ENCODE measurements at regions of chr9 and their contacts with region 1.

Region 1: GRCh38 chr9:73038613-73039012 is 85.8 kb upstream of the ALDH1A1 start:
- DNase-seq: peak; percentile 53 to 57
- H3K4me3 ChIP-seq: no peak overlapping the region
- H3K27ac ChIP-seq: no peak overlapping the region
- H3K4me1 ChIP-seq: peaks cover 30% of the 10 kb centered on the region
- H3K27me3 ChIP-seq: no peaks in the 10 kb centered on the region
- CTCF ChIP-seq: no peak

Region 2: DNA sequence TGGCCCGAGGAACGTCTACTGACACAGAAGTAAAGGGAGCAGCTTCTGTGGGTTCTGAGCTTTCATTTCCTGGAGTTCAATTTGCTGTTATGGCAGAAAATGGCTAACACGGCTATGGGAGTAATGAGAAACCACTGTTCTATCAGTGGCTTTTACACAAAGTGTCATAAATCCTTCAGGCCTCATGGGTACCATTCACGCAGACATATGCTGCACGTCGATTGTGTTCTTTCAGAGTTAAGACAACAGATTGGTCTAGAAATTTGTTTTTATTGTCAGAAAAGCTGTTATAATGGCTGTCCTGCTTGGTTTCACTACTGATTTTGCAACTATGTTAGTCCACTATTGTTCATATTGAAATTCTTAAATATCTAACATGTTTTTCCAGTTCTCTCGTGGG is 221.2 kb before region 1 on chr9:
- CTCF ChIA-PET with region 1: interaction called, 6 read pairs
- POLR2A ChIA-PET with region 1: interaction called, 10 read pairs
- intact Hi-C with region 1: no loop called
- DNase-seq: no peak
- H3K4me3 ChIP-seq: no peak overlapping the region
- H3K27ac ChIP-seq: no peak overlapping the region
- H3K4me1 ChIP-seq: no peaks in the 10 kb centered on the region; the same call in 1 of the 2 replicates
- H3K27me3 ChIP-seq: no peaks in the 10 kb centered on the region
- CTCF ChIP-seq: no peak

Region 3: DNA sequence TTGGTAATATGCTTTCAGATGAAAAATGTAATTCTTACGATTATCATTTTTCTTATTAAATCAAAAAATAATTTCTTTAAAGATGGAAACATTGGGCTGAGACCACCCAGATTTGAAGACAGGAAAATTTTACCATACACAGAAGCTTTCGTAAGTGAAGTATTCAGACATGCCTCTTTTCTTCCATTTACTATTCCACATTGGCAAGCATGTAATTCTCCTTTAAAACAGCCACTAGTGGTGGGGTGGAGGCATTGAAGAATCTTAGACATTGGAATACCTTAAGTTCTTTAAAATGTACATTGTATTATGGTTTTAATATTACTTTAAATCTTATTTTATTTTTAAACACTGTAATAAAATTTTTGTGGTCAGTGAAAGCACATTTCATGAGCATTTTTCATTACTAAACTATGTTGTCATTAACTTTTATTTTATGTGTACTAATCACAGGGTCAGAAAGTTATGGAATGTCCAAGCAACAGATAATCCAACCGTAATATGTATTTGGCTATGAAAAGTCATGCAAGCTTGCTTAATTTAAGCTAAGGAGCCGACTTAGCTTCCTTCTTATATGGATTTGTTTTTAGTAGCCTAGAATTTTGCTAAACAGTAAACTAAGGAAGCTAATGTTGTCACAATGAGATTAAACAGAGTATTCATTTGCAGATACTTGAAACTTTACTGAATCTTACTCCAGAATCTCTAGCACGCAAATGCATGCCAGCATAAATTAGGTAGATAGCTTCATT is 11.6 kb after region 1 on chr9:
- CTCF ChIA-PET with region 1: no interaction called
- POLR2A ChIA-PET with region 1: interaction called, 26 read pairs
- intact Hi-C with region 1: no loop called
- DNase-seq: no peak
- H3K4me3 ChIP-seq: no peak overlapping the region
- H3K27ac ChIP-seq: no peak overlapping the region
- H3K4me1 ChIP-seq: no peaks in the 10 kb centered on the region
- H3K27me3 ChIP-seq: no peaks in the 10 kb centered on the region
- CTCF ChIP-seq: no peak

Region 4: GRCh38 chr9:73143606-73144328 is 105.2 kb after region 1 on chr9:
- CTCF ChIA-PET with region 1: interaction called, 24 read pairs
- POLR2A ChIA-PET with region 1: no interaction called
- intact Hi-C with region 1: no loop called
- DNase-seq: peak; percentile 39 to 91
- H3K4me3 ChIP-seq: peak overlapping the region; percentile 16; the same call in 1 of the 2 replicates
- H3K27ac ChIP-seq: peak overlapping the region; percentile 96
- H3K4me1 ChIP-seq: peaks cover 44% of the 10 kb centered on the region
- H3K27me3 ChIP-seq: no peaks in the 10 kb centered on the region
- CTCF ChIP-seq: no peak

Measured in PC-9 (cell line).